ENCODE measurements at regions of chr6 and their contacts with region 1.

Region 1: DNA sequence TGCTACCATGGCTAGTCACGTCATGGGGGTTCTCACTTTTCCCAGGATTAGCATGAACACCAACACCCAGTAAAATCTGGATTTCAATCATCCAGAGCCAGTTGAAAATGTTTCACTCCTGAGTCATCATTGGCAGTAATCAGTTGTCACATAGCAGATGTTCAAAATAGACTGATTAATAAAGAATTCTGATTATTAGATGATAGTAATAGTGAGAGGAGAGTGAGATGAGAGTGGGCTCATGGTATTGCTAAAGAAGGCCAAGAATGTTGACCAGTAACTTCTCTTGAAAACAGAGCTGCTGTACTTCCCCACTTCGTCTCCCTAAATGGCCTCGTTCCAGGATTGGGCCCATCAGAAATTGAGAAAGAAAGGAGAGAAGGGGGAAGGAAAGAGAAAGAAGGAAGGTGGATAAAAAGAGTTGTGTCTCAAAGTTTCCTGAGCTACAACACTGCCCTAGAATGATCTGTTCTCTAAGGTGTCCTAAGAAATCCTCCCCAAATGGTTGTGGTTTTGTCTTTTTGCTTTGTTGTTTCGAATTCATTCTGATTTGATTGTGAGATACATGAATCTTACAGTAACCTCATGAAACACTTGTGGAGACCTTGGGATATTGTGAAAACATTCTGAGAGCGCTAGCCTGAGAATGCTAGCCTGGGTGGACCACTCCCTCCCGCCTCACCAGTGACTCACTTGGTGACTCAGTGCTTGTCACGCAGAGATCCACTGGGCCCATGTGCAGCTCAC is 502.2 kb upstream of the JARID2 start:
- DNase-seq: peak in 1 of 2 donors; percentile 24
- H3K4me3 ChIP-seq: no peak overlapping the region
- H3K27ac ChIP-seq: peak overlapping the region in 1 of 2 donors; percentile 58
- H3K4me1 ChIP-seq: no peaks in the 10 kb centered on the region
- H3K27me3 ChIP-seq: no peaks in the 10 kb centered on the region
- CTCF ChIP-seq: no peak
- POLR2A ChIP-seq: no peak

Region 2: GRCh38 chr6:14258695-14259593 is 484.7 kb before region 1 on chr6:
- intact Hi-C with region 1: loop called (anchors 5 kb)
- DNase-seq: no peak
- H3K4me3 ChIP-seq: no peak overlapping the region
- H3K27ac ChIP-seq: no peak overlapping the region
- H3K4me1 ChIP-seq: no peaks in the 10 kb centered on the region
- H3K27me3 ChIP-seq: no peaks in the 10 kb centered on the region
- CTCF ChIP-seq: no peak
- POLR2A ChIP-seq: no peak

Region 3: DNA sequence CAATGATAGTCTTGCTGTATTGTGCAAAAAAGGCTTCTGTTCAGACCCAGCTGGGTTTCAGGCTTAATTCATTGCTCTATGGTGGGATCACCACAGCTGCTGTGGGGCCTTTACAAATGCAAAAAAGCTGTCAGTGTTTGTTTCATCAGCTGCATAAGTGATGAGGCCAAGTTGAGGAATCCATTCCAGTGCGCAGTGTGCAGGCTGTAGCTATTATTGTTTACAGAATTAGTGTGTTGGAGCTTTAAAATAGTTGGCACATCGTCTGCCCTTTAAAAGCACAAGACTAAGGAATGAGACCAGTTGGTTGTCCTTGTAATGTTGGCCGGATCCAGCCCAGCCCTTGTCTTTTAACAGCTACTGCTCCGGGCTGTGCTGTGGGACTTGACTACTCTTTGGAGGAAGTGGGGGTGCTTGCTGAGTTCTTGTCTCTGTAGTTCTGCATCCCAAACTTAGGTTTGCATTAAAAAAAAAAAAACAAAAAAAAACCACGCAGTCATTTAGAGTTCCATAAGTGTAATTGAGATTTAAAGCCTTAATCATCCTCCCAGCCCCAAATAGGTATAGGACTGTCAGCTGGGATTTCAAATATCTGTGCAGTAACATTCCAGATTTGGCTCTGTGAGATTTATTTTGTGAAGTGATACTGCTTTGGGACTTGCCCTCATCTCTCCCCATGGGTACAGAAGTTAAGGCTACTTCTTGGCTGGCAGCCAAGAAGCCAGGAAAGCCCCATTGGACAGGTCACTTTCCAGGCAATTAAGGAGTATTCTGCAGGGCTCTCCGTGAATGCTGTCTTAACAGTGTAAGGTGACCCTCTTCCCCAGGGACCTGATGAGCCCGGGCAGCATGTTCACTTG is 521.5 kb after region 1 on chr6:
- intact Hi-C with region 1: loop called (anchors 5 kb)
- DNase-seq: no peak
- H3K4me3 ChIP-seq: no peak overlapping the region
- H3K27ac ChIP-seq: peak overlapping the region; percentile 5 to 66
- H3K4me1 ChIP-seq: peaks cover 7 to 14% of the 10 kb centered on the region in 2 donors
- H3K27me3 ChIP-seq: no peaks in the 10 kb centered on the region
- CTCF ChIP-seq: no peak
- POLR2A ChIP-seq: no peak